ENCODE measurements at regions of chr12 and their contacts with region 1.

Region 1: DNA sequence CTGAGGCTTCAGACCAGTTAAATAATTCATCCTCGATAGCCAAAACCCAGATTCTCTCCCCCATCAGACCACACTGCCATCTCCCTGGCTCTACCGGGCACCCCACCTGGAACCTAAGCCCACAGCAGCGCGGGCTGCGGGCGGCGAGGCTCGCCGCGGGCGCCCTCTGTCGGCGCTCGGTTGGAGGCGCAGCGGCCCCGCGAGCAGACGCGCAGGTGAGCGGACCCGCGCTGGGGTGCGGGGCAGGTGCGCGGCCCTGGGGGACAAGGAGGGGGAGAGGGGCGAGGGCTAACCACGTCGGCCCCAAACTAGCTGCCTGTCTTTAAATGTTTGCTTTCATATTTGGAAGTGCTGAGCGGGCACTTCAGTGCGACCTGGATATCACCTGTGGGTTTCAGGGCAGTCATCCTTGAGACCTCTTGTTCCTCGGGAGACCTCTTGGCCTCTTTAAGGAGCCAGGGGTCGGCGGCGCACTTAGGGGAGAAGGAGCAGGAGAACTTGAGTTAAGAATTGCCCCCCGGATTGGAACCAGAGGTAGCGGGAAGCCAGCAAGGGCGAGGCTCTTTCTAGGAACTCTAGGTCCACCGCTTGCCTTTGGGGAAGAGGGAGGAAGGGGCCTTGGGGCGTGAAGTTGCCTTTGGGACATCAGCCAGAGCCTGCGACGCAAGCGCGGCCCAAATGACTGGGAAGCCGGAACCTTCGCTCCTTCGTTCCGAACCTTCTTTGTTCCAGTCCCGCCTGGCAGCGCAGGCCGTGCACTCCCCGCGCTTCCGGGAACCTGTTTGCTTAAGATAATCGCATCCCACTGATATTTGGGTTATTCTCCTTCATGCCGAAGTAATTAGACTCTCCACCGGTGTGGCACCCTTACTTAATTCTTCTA is 78.7 kb downstream of the NEDD1 start:
- DNase-seq: no peak
- H3K4me3 ChIP-seq: peak overlapping the region; percentile 49
- CTCF ChIP-seq: peak; percentile 62

Region 2: DNA sequence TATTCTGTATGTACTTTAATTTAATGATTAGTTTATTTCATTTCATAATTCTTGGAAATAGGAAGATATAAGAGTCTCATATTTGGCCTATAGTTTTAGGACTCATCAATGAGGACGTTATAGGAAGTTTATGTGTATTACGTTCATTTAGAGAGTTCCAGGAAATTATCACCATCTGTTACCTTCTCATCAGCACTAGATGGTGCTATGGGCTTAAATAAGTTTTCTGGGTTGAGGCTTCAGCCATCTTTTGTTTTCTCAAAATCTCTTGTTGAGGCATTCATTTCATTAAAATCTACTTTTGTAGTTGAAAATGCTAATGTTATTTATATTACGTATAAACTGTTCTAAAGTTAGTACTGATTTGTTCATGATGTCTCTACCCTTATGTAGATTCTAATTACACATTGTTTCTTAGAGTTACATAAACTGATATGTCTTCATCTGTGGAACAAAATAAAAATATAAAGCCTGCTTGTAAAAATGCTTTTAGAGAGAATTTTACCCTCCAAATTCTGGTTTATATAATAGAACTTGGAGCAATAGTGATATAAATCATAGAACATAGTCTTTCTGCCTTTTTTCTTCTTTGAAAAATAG is 407.1 kb before region 1 on chr12:
- CTCF ChIA-PET with region 1: interaction called, 71 read pairs
- POLR2A ChIA-PET with region 1: no interaction called
- DNase-seq: no peak
- H3K4me3 ChIP-seq: no peak overlapping the region
- CTCF ChIP-seq: peak; percentile 39

Region 3: GRCh38 chr12:97308576-97309198 is 323.0 kb after region 1 on chr12:
- CTCF ChIA-PET with region 1: interaction called, 11 read pairs
- POLR2A ChIA-PET with region 1: no interaction called
- DNase-seq: peak; percentile 7
- H3K4me3 ChIP-seq: no peak overlapping the region
- CTCF ChIP-seq: peak; percentile 45

Region 4: GRCh38 chr12:97336900-97337751 is 351.4 kb after region 1 on chr12:
- CTCF ChIA-PET with region 1: no interaction called
- POLR2A ChIA-PET with region 1: no interaction called
- DNase-seq: no peak
- H3K4me3 ChIP-seq: no peak overlapping the region
- CTCF ChIP-seq: no peak

Region 5: GRCh38 chr12:98374006-98374405 is 1388.3 kb after region 1 on chr12:
- CTCF ChIA-PET with region 1: interaction called, 10 read pairs
- POLR2A ChIA-PET with region 1: no interaction called
- DNase-seq: no peak
- H3K4me3 ChIP-seq: no peak overlapping the region
- CTCF ChIP-seq: peak; percentile 10